ENCODE measurements at regions of chr14 and their contacts with region 1.

Region 1: GRCh38 chr14:22929104-22929847 is at the start of gene PRMT5:
- DNase-seq: peak; percentile 99
- H3K4me3 Mint-ChIP-seq: no peak within 1 kb of the TSS
- H3K27ac Mint-ChIP-seq: no peak within 1 kb of the TSS
- H3K4me1 Mint-ChIP-seq: peaks cover 34% of the 10 kb centered on the region
- H3K27me3 Mint-ChIP-seq: no peaks in the 10 kb centered on the region
- total RNA-seq, gene PRMT5: 81.0 to 92.8 TPM

Region 2: DNA sequence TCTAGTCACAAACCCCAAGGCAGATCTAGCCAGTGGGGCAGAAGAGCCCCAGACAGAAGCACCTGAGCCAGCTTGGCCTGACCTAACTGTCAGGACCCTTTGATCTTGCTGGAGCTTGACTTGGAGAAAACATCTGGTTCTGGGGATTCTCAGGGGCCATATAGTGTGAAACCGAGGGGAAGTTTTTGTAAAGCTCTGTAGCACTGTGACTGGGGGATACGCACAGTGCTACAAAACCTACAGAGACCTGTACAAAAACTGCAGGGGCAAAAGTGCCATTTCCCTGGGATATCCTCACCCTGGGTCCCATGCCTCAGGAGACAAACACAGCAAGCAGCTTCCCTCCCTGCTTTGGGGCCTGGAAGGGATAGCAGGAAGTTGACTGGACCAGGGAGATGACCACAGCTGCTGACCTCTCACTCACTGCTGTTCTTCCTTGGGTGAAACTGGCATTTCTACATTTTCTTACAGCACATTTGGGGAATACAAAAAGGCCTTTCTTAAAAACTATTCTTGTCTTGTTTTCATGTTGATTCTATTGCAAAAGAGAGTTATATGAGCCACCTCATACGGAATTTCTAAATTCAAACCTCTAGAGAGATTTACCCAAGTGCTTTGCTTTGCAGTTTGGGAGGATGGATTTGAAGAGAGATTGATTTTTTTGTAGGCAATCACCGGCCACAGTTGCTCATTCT is 480.2 kb before region 1 on chr14:
- CTCF ChIA-PET with region 1: no interaction called
- intact Hi-C with region 1: no loop called
- DNase-seq: no peak
- H3K4me3 Mint-ChIP-seq: no peak overlapping the region
- H3K27ac Mint-ChIP-seq: no peak overlapping the region
- H3K4me1 Mint-ChIP-seq: no peaks in the 10 kb centered on the region
- H3K27me3 Mint-ChIP-seq: no peaks in the 10 kb centered on the region

Region 3: GRCh38 chr14:22872033-22872832 is 57.0 kb before region 1 on chr14:
- CTCF ChIA-PET with region 1: interaction called, 9 read pairs
- intact Hi-C with region 1: loop called (anchors 1 kb)
- DNase-seq: peak; percentile 87
- H3K4me3 Mint-ChIP-seq: peak overlapping the region; percentile 91
- H3K27ac Mint-ChIP-seq: peak overlapping the region; percentile 100
- H3K4me1 Mint-ChIP-seq: peaks cover 29% of the 10 kb centered on the region
- H3K27me3 Mint-ChIP-seq: no peaks in the 10 kb centered on the region

Region 4: GRCh38 chr14:22939684-22940083 is 10.4 kb after region 1 on chr14:
- CTCF ChIA-PET with region 1: interaction called, 15 read pairs
- intact Hi-C with region 1: no loop called
- DNase-seq: no peak
- H3K4me3 Mint-ChIP-seq: no peak overlapping the region
- H3K27ac Mint-ChIP-seq: no peak overlapping the region
- H3K4me1 Mint-ChIP-seq: no peaks in the 10 kb centered on the region
- H3K27me3 Mint-ChIP-seq: no peaks in the 10 kb centered on the region

Region 5: DNA sequence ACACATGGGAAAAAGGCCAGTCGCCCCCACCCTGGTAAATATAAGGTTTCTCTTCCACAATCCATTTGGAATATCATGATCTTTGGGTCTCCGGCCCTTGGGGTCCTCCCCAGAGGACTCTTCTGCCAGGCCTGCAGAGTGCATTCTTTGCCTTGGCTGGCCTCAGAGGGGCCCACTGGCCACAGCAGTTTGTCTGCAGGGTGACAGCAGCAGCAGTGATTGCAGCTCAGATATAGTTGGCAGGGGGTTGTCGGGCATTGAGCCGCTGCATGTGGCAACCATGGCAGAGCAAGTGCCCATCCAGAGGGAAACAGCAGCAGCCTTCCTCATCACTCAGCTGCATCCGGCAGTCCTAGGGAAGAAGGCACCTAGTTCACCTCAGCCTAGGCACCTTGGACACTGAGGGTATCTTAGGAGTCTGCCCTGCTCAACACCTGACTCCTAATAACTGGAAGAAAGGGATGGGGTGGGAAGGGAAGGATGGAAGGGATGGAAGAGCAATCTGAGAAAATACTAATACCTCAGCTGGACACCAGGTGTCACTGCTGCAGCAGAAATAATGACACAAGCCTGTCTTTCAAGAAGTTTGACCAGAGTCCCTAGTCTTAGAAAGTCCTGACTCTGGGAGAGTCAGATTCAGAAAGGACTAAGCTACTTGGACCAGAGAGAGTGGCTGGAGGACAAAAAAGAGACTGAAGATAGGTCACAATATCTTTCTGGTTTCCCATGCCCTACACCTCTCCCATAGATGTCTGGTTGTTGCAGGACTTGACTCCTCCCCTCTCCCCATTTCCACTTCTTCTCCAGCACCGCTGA is 44.1 kb after region 1 on chr14:
- CTCF ChIA-PET with region 1: interaction called, 14 read pairs
- intact Hi-C with region 1: no loop called
- DNase-seq: peak; percentile 64
- H3K4me3 Mint-ChIP-seq: no peak overlapping the region
- H3K27ac Mint-ChIP-seq: no peak overlapping the region
- H3K4me1 Mint-ChIP-seq: no peaks in the 10 kb centered on the region
- H3K27me3 Mint-ChIP-seq: no peaks in the 10 kb centered on the region

Region 6: GRCh38 chr14:23057757-23058653 is 128.7 kb after region 1 on chr14:
- CTCF ChIA-PET with region 1: interaction called, 4 read pairs
- intact Hi-C with region 1: loop called (anchors 2 kb)
- DNase-seq: peak; percentile 92
- H3K4me3 Mint-ChIP-seq: peak overlapping the region; percentile 80
- H3K27ac Mint-ChIP-seq: no peak overlapping the region
- H3K4me1 Mint-ChIP-seq: peaks cover 16% of the 10 kb centered on the region
- H3K27me3 Mint-ChIP-seq: peaks cover 5% of the 10 kb centered on the region

Region 7: DNA sequence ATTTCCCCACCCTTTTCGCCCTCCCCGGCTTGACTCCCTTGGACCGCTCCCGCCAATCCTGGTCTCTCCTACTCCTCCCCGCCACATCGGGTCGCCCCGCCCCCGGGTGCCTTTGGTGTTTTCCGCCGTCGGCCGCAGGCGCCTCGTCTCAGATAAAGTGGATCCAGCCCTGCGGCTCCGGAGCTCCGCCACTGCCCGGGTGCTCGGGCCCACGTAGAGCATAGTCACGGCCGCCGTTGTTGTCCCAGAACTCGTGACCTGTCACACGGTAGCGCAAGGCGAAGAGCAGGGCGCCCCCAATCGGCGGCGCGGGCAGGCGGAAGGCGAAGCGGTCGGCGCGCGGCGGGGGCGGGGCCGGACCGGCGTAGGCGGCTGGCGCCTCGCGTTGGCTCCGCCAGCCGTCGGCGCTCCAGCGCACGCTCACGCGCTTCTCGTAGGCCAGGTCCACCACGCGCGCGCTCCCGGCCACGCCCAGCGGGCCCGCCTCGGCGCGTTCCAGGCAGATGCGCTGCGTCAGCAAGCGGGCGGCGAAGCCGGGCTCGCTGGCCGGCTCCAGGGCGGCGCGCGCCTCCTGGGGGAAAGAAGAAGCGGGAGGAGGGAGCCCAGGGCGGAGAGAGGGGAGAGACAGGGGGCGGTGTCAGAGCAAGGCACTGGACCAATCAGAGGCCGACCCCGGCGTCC is 372.2 kb after region 1 on chr14:
- CTCF ChIA-PET with region 1: no interaction called
- intact Hi-C with region 1: loop called (anchors 1 kb)
- DNase-seq: peak; percentile 96
- H3K4me3 Mint-ChIP-seq: peak overlapping the region; percentile 90
- H3K27ac Mint-ChIP-seq: peak overlapping the region; percentile 92
- H3K4me1 Mint-ChIP-seq: peaks cover 12% of the 10 kb centered on the region
- H3K27me3 Mint-ChIP-seq: peaks cover 13% of the 10 kb centered on the region

Measured in activated naive CD4-positive, alpha-beta T cell treated with anti-CD3 and anti-CD28 coated beads for 36 hours (primary cell).